Right ventricle myocardium inferior (tissue), 1 donor: ENCODE measurements at regions of chr15 and their contacts with region 1.

Region 1: GRCh38 chr15:68053701-68054627 is at the start of gene PIAS1:
- DNase-seq: peak; percentile 99
- ATAC-seq: peak; percentile 99
- total RNA-seq, gene PIAS1: 26.1 TPM

Region 2: DNA sequence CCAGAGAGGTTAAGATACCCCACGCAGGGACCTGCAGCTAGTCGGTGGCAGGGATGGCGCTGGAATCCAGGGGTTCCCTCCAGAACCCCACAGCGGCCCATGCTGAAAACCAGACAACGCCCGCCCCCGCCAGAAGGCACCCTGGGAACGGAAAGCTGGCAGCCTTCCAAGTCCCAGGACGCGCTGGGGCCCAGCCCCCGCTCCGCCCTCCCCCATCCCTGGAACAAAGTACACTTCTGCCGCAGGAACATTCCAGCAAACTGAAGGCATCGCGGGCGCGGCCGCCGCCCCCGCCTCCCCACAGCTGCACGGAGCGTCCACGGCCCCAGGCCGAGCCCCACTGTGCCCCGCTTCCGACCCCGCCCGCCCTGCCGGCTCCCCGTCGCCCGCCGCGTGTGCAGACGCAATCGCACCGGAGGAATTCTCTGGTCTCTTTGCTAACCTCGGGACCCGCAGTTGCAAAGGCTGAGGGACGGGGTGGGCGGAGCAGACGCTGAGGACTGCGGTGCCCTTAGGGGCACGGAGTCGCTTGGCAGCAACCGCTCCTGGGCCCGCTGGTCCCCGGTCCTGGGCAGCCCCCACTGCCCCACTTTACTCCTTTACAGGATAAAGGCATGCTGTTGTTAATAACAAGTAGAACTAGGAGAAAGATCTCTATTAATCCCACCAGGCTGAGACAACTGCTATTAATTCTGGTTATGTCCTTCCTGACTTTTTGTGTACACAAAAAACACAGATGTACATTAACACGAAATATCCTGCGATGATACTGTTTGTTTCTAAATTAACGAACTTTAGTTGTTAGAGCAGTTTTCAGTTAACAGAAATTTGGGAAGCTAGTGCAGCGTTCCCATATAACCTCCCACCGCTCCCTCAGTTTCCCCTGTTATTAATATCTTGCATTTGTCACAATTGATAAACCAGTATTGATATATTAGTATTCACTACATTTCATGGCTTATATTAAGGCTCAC is 169.2 kb before region 1 on chr15:
- intact Hi-C with region 1: no loop called
- DNase-seq: peak; percentile 89
- ATAC-seq: peak; percentile 95

Region 3: DNA sequence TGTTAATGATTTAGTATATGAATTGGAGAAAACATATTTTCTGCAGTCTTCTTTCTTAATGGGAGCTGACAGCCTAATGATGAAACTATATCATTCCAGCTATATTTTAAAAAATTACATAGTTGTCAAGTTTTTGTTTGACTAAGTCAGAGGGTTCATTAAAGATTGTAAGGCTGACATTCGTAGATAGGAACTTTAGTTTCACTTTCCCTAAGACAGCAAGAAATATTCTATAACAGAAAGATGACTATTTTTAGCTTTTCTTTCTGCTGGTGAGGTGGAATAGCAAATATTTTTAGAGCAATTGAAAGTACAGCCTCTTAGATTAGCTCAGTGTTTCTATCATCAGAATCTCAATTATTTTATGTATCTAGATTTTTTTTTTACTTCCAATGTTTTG is 60.4 kb after region 1 on chr15:
- intact Hi-C with region 1: no loop called
- DNase-seq: no peak
- ATAC-seq: peak; percentile 56

Region 4: DNA sequence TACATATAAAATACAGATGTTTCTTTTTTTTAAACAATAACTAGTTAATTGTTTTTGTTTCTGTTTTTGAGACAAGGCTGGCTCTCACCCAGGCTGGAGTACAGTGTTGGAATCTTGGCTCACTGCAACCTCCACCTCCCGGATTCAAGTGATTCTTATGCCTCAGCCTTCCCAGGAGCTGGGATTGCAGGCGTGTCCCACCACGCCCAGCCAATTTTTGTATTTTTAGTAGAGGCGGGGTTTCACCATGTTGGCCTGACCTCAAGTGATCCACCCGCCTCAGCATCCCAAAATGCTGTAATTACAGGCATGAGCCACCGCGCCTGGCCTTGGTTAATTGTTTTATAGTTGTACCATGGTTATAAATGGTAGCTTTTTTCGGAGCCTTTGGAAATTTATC is 72.4 kb after region 1 on chr15:
- intact Hi-C with region 1: loop called (anchors 5 kb)
- DNase-seq: no peak
- ATAC-seq: peak; percentile 80

Region 5: DNA sequence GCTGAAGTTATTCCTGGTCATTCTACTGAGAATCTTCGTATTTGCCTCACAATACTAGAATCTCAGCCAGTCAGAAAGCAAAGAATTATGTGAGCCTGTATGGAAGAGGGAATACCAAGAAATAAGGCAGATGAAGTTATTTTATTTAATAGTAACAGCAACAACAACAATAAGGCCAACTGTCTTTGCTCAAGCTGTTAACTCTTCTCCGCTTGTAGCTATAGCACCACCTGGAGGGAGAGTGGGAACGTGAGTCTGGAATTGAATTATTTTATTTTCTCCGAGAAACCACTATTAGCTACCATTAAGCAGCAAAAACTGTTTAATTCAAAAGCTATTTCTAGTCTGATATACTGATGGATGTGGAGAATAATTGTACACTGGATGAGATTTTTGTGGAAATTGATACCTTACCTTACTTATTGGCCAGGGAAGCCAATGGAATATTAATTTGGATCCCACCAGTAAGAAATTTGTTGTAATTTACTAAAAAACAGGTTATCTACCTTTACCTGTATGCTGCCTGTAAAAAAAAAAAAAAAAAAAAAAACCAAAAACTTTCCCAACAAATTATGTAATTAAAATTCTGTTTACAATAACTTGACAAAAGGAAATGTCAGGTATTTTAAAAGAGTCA is 101.1 kb after region 1 on chr15:
- intact Hi-C with region 1: loop called (anchors 5 kb)
- DNase-seq: no peak
- ATAC-seq: peak; percentile 50